Natural killer cell (primary cell): ENCODE measurements at regions of chr6 and their contacts with region 1.

Region 1: GRCh38 chr6:125512621-125513020 is 210.9 kb upstream of the HDDC2 start:
- DNase-seq: peak in 1 of 2 donors; percentile 10
- ATAC-seq: no peak
- H3K4me3 ChIP-seq: no peak overlapping the region
- H3K4me3 Mint-ChIP-seq: no peak overlapping the region
- H3K27ac ChIP-seq: no peak overlapping the region
- H3K27ac Mint-ChIP-seq: no peak overlapping the region
- H3K4me1 ChIP-seq: no peaks in the 10 kb centered on the region
- H3K4me1 Mint-ChIP-seq: no peaks in the 10 kb centered on the region
- H3K27me3 ChIP-seq: peaks cover 2% of the 10 kb centered on the region
- H3K27me3 Mint-ChIP-seq: peaks cover 8 to 12% of the 10 kb centered on the region in 2 donors
- CTCF ChIP-seq: no peak

Region 2: DNA sequence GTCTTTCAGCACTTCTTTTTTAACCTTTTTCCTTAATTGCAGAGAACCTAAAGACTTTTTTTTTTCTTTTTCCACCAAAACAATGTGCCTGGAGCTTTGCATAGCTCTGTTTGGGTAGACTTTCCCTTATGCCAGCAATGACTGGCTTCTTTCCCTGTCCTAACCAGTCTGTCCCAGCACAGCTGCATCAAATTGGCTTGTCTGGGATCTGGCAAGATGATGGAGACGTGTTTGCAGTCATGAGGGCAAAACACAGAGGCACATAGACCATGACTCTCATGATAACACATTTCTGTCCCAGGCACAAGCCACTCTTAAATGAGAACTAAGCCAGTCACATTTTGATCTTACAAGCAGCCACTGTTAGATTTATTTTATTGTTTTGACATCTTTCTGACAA is 253.3 kb after region 1 on chr6:
- intact Hi-C with region 1: loop called (anchors 5 kb)
- DNase-seq: no peak
- ATAC-seq: no peak
- H3K4me3 ChIP-seq: no peak overlapping the region
- H3K4me3 Mint-ChIP-seq: no peak overlapping the region
- H3K27ac ChIP-seq: no peak overlapping the region
- H3K27ac Mint-ChIP-seq: no peak overlapping the region
- H3K4me1 ChIP-seq: no peaks in the 10 kb centered on the region
- H3K4me1 Mint-ChIP-seq: no peaks in the 10 kb centered on the region
- H3K27me3 ChIP-seq: peaks cover 9% of the 10 kb centered on the region
- H3K27me3 Mint-ChIP-seq: peaks cover 29 to 65% of the 10 kb centered on the region in 2 donors
- CTCF ChIP-seq: no peak